Calu3 (cell line): ENCODE measurements at regions of chr15 and their contacts with region 1.

Region 1: GRCh38 chr15:78944669-78945407 is at the start of gene CTSH:
- DNase-seq: peak; percentile 97
- H3K4me3 Mint-ChIP-seq: peak within 1 kb of the TSS; percentile 100
- H3K27ac Mint-ChIP-seq: peak within 1 kb of the TSS; percentile 82
- H3K4me1 Mint-ChIP-seq: peaks cover 19% of the 10 kb centered on the region
- H3K27me3 Mint-ChIP-seq: no peaks in the 10 kb centered on the region
- CTCF ChIP-seq: no peak
- total RNA-seq, gene CTSH: 327 and 433 TPM in 2 replicates

Region 2: DNA sequence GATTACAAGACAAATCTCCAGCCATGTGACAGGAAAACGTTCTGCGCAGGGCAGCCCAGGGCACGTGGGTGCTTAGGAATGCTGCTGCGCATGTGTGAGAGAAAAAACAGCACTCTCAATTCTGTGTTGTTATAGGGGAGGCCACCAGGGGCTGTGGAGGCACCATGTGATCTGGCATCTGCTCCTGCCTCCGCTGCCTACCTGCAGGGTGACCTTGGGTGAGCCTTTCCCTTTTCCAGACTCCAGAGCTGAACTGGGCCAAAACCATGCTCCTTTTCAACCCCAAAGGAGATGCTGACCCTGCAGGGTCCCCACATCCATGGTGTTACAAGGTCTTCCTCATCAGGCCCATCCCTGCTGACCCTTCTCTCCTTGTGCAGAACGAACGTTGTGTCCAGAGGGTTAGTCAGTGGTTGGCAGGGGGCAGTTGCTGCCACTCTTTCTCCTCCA is 227.2 kb after region 1 on chr15:
- CTCF ChIA-PET with region 1: interaction called, 11 read pairs
- intact Hi-C with region 1: no loop called
- DNase-seq: no peak
- H3K4me3 Mint-ChIP-seq: no peak overlapping the region
- H3K27ac Mint-ChIP-seq: no peak overlapping the region
- H3K4me1 Mint-ChIP-seq: peaks cover 27% of the 10 kb centered on the region
- H3K27me3 Mint-ChIP-seq: peaks cover 29% of the 10 kb centered on the region
- CTCF ChIP-seq: no peak